Activated T-helper 2 cell treated with anti-CD3 and anti-CD28 coated beads, Interferon-gamma antibody, Interleukin-2, Interleukin-4, amounts not matched to agents 10 μg/mL and 5 μg/mL and 100 μg/mL, durations not matched to agents 14 hours and 24 hours and 36 hours (primary cell): ENCODE measurements at regions of chr3 and their contacts with region 1.

Region 1: DNA sequence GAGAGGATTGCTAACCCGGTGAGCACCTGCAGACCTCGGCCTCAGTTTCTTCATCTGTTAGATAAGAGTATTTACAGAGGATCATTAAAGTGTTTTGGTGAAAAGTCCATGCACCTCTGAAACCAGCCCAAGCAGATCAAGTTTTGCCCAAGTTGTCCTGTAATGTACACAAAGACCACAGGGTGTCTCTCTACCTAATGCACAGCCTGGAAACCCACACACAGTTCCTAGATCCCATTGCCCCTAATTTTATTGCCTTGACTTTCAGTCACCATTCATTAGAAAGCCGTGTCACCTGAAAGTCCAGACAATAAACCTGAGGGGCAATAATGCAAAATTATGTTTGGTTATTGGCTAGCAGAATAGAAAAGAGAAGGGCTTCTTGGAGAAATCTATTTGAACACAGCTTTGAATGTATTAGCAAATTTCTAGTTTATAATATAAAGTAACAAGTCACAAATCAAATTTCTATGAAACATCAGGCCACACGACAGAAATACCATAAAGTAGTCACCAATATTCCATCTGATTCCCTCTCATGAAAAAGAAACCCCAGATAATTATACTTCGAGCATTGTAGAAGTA is 161.3 kb upstream of the SLC2A2 start:
- DNase-seq: no peak
- H3K4me3 Mint-ChIP-seq: no peak overlapping the region
- H3K27ac Mint-ChIP-seq: no peak overlapping the region
- H3K4me1 Mint-ChIP-seq: peaks cover 70% of the 10 kb centered on the region
- H3K27me3 Mint-ChIP-seq: no peaks in the 10 kb centered on the region

Region 2: DNA sequence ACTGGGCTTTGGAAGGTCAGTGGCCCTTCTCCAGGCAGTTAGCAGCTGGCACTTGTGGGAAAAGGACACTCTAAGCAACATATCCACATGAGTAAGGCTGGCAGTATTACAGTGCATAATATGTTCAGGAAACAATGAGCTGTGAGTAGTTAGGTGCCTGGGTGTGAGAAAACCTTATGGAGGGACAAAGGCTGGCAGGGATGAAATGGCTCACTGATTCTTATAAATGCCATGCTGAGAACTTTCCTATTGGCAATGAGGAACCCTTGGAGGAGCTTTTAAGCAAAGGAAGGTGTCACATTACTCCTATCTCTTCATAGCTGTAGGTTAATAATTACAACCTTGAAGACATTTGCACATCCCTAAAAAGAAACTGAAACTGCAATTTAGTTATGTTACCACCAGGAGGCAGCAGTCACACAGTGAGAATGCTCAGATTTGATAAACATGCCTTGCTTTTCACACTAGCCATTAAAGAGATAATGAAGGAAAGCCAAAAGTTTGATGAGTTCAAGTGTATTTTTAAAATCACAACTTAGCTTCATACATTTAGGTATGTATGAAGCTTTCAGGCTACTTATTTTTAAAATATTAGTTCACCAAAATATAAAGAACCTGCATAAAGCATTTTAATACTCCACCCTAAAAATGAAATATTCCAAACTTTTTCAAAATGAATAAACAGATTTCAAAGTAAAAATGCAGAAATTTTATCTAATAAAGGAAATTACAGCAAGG is 24.6 kb before region 1 on chr3:
- intact Hi-C with region 1: loop called (anchors 2 kb)
- DNase-seq: no peak
- H3K4me3 Mint-ChIP-seq: no peak overlapping the region
- H3K27ac Mint-ChIP-seq: no peak overlapping the region
- H3K4me1 Mint-ChIP-seq: peaks cover 18% of the 10 kb centered on the region
- H3K27me3 Mint-ChIP-seq: no peaks in the 10 kb centered on the region

Region 3: DNA sequence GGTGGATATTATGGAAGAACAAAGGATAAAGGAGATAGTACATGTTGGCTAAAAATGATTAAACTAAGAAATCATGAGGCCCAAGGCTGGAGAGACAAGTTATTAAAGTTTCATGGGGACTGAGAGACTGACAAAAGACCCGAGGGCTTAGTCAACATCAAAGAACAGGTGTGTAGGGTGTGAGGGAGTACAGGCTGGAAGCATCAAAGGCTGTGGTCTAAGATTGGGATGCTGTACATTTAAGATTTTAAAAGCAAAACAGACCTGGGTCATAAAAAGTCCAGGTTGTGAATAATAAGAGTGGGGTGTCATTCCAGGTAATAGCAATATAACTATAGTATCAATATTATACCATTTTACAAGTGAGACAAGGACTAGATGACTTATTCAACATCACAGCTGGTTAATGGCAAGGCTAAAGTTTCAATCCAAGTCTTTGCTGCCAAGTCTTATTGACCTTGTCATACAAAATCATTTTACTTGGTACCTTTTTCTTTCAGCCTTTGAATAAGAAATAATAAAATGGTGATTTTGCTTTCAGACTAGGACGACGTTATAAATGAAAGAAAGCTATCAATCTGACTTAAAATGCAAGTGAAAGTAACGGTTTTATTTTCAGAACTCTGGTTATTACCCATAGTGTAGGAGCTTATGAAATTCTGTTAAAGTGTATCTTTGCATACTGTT is 60.8 kb after region 1 on chr3:
- intact Hi-C with region 1: loop called (anchors 1 kb)
- DNase-seq: no peak
- H3K4me3 Mint-ChIP-seq: no peak overlapping the region
- H3K27ac Mint-ChIP-seq: no peak overlapping the region
- H3K4me1 Mint-ChIP-seq: peaks cover 40% of the 10 kb centered on the region
- H3K27me3 Mint-ChIP-seq: no peaks in the 10 kb centered on the region

Region 4: DNA sequence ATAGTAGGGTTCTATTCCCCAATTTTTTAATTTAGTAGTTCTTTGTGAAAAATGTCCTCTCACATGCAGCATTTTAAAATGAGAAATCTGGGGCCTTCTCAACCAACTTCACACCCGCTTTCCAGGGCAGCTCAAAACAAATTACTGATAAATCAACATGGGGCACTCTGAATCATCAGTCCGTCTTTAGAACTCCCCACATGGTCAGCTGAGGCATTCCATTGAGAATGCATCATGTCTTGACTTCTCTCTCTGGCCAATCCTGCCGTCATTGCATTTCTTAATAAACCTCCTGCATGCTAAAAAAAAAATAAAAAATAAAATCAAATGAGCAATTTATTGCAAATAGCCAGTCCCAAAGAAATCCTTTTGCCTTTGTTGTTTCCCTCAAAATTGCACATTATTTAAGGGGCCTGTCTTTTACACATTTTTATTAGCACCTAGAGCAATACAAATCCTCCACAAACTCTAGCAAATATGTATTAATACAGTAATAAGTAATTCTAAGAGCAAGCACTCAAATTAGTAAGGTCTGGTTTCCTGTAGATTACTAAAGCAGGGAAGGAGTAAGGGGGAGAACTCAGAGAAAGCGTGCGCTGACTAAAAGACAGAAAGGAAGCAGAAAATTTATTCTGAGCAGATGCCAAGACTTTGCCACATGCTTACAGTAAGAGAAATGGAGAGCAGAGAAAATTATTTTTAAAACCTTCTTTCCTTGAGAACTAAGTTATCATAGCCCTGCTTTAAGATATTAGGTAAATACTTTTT is 96.7 kb after region 1 on chr3:
- intact Hi-C with region 1: loop called (anchors 1 kb)
- DNase-seq: no peak
- H3K4me3 Mint-ChIP-seq: peak overlapping the region; percentile 34
- H3K27ac Mint-ChIP-seq: peak overlapping the region; percentile 68
- H3K4me1 Mint-ChIP-seq: peaks cover 74% of the 10 kb centered on the region
- H3K27me3 Mint-ChIP-seq: no peaks in the 10 kb centered on the region

Region 5: DNA sequence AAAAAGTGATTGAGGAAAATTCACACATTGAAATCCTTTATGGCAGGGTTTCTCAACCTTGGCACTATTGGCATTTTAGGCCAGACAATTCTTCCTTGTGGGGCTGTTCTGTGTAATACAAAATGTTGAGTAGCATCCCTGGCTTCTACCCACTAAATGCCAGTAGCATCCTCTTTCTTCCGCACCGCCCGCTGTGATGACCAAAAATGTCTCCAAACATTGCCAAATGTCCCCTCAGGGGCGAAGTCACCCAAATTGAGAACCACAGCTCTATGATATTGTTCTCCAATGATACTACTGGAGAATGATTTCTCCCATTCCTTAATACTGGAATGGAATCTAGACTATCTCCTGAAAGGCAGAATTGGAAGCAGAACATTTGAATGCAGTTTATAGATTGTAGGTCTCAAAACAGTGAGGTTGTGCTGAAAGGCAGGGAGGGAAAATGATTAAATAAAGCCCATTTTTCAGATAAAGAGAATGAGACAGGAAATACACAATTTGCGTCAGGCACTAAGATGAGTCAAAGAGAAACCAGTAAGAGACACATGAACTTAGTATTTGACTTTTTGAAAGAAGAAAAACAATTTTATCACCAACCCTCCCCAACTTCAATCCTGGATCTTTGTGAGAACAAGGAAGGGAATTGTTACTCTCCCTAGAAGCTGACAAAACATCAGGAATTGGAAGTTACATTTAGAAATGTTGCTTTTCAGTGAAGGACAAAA is 374.0 kb after region 1 on chr3:
- intact Hi-C with region 1: loop called (anchors 1 kb)
- DNase-seq: no peak
- H3K4me3 Mint-ChIP-seq: peak overlapping the region; percentile 58
- H3K27ac Mint-ChIP-seq: peak overlapping the region; percentile 98
- H3K4me1 Mint-ChIP-seq: peaks cover 55% of the 10 kb centered on the region
- H3K27me3 Mint-ChIP-seq: no peaks in the 10 kb centered on the region